Activated CD4-positive, alpha-beta memory T cell treated with anti-CD3 and anti-CD28 coated beads for 36 hours (primary cell): ENCODE measurements at regions of chr2 and their contacts with region 1.

Region 1: GRCh38 chr2:23926750-23927571 is at the start of gene ATAD2B:
- DNase-seq: peak; percentile 96
- H3K4me3 Mint-ChIP-seq: peak within 1 kb of the TSS; percentile 99
- H3K27ac Mint-ChIP-seq: peak within 1 kb of the TSS; percentile 99
- H3K4me1 Mint-ChIP-seq: peaks cover 42% of the 10 kb centered on the region
- H3K27me3 Mint-ChIP-seq: no peaks in the 10 kb centered on the region
- total RNA-seq, gene ATAD2B: 13.2 to 14.3 TPM

Region 2: GRCh38 chr2:23824777-23825212 is 102.2 kb before region 1 on chr2:
- CTCF ChIA-PET with region 1: interaction called, 53 read pairs
- POLR2A ChIA-PET with region 1: interaction called, 11 read pairs
- intact Hi-C with region 1: loop called (anchors 1 kb)
- DNase-seq: no peak
- H3K4me3 Mint-ChIP-seq: no peak overlapping the region
- H3K27ac Mint-ChIP-seq: no peak overlapping the region
- H3K4me1 Mint-ChIP-seq: peaks cover 2% of the 10 kb centered on the region
- H3K27me3 Mint-ChIP-seq: no peaks in the 10 kb centered on the region

Region 3: GRCh38 chr2:23867449-23867848 is 59.5 kb before region 1 on chr2:
- CTCF ChIA-PET with region 1: interaction called, 7 read pairs
- POLR2A ChIA-PET with region 1: interaction called, 6 read pairs
- intact Hi-C with region 1: loop called (anchors 1 kb)
- DNase-seq: no peak
- H3K4me3 Mint-ChIP-seq: no peak overlapping the region
- H3K27ac Mint-ChIP-seq: peak overlapping the region; percentile 55
- H3K4me1 Mint-ChIP-seq: peaks cover 12% of the 10 kb centered on the region
- H3K27me3 Mint-ChIP-seq: no peaks in the 10 kb centered on the region

Region 4: DNA sequence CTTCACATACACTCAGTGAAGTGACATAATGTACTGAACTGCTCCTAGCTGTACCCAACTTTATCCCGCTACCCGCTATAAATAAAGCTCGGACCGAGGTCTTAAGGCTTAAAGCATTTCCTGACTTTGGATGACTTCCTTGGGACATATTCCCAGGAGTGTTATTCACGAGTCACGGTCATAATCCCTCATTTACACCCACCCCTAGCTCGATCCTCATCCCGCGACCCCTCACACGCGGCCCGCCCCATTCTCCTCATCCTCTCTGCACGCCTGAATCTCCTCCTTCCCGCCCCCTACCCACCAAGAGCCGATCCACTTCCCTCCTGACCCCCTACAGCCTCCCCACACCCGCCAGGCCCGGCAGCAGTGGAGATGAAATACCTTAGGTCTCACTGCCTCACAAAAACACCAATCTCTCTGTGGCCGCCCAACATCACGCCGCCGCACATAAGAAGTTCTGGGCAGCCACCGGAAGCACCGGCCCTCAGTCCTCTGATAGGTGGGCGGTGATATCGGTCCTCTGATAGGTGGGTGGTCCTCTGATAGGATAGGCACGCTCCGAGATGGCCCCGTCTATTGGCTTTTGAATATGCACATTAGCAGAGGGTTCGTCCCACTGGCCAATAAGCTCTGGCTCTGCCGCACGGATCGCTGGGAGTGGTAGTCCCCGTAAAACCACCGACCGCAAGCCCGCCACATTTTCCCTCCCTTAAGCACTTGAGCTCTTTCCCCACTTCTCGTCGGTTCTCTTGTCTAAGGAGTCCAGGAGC is 120.2 kb after region 1 on chr2 and contains the start of gene WDCP:
- CTCF ChIA-PET with region 1: interaction called, 15 read pairs
- POLR2A ChIA-PET with region 1: interaction called, 34 read pairs
- intact Hi-C with region 1: loop called (anchors 1 kb)
- DNase-seq: peak; percentile 97
- H3K4me3 Mint-ChIP-seq: peak within 1 kb of the TSS; percentile 95
- H3K27ac Mint-ChIP-seq: peak within 1 kb of the TSS; percentile 74
- H3K4me1 Mint-ChIP-seq: peaks cover 21% of the 10 kb centered on the region
- H3K27me3 Mint-ChIP-seq: peaks cover 3% of the 10 kb centered on the region
- total RNA-seq, gene WDCP: 18.4 to 21.2 TPM

Region 5: GRCh38 chr2:24084386-24085361 is 157.7 kb after region 1 on chr2 and contains the start of gene TP53I3:
- CTCF ChIA-PET with region 1: interaction called, 82 read pairs
- POLR2A ChIA-PET with region 1: interaction called, 18 read pairs
- intact Hi-C with region 1: loop called (anchors 1 kb)
- DNase-seq: peak; percentile 87
- H3K4me3 Mint-ChIP-seq: peak within 1 kb of the TSS; percentile 81
- H3K27ac Mint-ChIP-seq: peak within 1 kb of the TSS; percentile 61
- H3K4me1 Mint-ChIP-seq: peaks cover 14% of the 10 kb centered on the region
- H3K27me3 Mint-ChIP-seq: no peaks in the 10 kb centered on the region
- total RNA-seq, gene TP53I3: 0.90 to 0.94 TPM

Region 6: GRCh38 chr2:24164125-24164973 is 237.4 kb after region 1 on chr2:
- CTCF ChIA-PET with region 1: no interaction called
- POLR2A ChIA-PET with region 1: no interaction called
- intact Hi-C with region 1: loop called (anchors 5 kb)
- DNase-seq: peak; percentile 58
- H3K4me3 Mint-ChIP-seq: no peak overlapping the region
- H3K27ac Mint-ChIP-seq: no peak overlapping the region
- H3K4me1 Mint-ChIP-seq: no peaks in the 10 kb centered on the region
- H3K27me3 Mint-ChIP-seq: no peaks in the 10 kb centered on the region

Region 7: GRCh38 chr2:24238158-24238557 is 311.2 kb after region 1 on chr2:
- CTCF ChIA-PET with region 1: no interaction called
- POLR2A ChIA-PET with region 1: no interaction called
- intact Hi-C with region 1: no loop called
- DNase-seq: no peak
- H3K4me3 Mint-ChIP-seq: no peak overlapping the region
- H3K27ac Mint-ChIP-seq: no peak overlapping the region
- H3K4me1 Mint-ChIP-seq: no peaks in the 10 kb centered on the region
- H3K27me3 Mint-ChIP-seq: no peaks in the 10 kb centered on the region

Region 8: GRCh38 chr2:24971536-24972314 is 1044.8 kb after region 1 on chr2 and contains the start of gene DNAJC27:
- CTCF ChIA-PET with region 1: no interaction called
- POLR2A ChIA-PET with region 1: no interaction called
- intact Hi-C with region 1: loop called (anchors 5 kb)
- DNase-seq: peak; percentile 98
- H3K4me3 Mint-ChIP-seq: peak within 1 kb of the TSS; percentile 96
- H3K27ac Mint-ChIP-seq: peak within 1 kb of the TSS; percentile 100
- H3K4me1 Mint-ChIP-seq: peaks cover 6% of the 10 kb centered on the region
- H3K27me3 Mint-ChIP-seq: no peaks in the 10 kb centered on the region
- total RNA-seq, gene DNAJC27: 5.5 to 6.9 TPM